ENCODE measurements at regions of chr1 and their contacts with region 1.

Region 1: GRCh38 chr1:160291248-160292220 is 6.6 kb upstream of the PEX19 start:
- DNase-seq: peak; percentile 62
- H3K4me3 ChIP-seq: no peak overlapping the region
- H3K27ac ChIP-seq: no peak overlapping the region
- H3K4me1 ChIP-seq: no peaks in the 10 kb centered on the region
- H3K27me3 ChIP-seq: no peaks in the 10 kb centered on the region
- CTCF ChIP-seq: peak; percentile 86
- EP300 ChIP-seq: no peak
- RAD21 ChIP-seq: peak; percentile 61

Region 2: DNA sequence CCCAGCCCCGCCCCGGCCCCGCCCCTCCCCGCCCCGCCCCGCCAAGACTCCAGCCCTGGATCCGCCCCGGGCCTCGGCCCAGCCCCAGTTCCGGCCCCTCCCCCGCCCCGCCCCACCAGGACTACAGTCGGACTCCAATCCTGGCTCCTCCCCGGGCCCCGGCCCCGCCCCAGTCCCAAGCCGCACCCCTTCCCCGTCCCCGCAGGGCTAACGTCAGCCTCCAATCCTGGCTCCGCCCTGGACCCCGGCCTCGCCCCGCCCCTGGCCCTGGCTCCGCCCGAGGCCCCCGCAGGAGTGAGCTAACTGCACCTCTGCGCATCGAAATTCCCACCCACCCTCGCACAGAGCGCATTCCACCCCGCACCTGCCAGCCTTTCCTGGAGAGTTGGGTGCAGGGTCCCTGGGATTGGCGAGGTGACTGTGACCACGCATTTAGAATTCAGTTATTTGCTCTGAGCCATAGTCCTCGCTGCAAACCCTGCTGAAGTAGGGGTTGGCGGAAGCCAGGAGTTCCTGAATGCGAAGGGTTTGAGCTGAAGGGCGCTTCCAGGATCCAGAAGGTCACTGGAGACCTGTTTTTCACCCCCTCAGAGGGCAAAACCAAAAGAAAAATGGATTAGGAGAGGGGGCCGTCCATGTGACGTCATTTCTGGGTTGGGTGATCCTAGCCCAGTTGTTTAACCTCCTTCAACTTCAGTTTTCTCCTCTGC is 192.5 kb before region 1 on chr1:
- CTCF ChIA-PET with region 1: interaction called, 102 read pairs
- POLR2A ChIA-PET with region 1: no interaction called
- DNase-seq: peak; percentile 98
- H3K4me3 ChIP-seq: peak overlapping the region; percentile 36 to 44; a peak in 3 of 4 replicates
- H3K27ac ChIP-seq: peak overlapping the region; percentile 35 to 55; a peak in 3 of 4 replicates
- H3K4me1 ChIP-seq: peaks cover 7 to 28% of the 10 kb centered on the region in 2 experiments; a peak in 1 of 4 replicates
- H3K27me3 ChIP-seq: no peaks in the 10 kb centered on the region
- CTCF ChIP-seq: no peak
- EP300 ChIP-seq: no peak
- RAD21 ChIP-seq: no peak

Region 3: DNA sequence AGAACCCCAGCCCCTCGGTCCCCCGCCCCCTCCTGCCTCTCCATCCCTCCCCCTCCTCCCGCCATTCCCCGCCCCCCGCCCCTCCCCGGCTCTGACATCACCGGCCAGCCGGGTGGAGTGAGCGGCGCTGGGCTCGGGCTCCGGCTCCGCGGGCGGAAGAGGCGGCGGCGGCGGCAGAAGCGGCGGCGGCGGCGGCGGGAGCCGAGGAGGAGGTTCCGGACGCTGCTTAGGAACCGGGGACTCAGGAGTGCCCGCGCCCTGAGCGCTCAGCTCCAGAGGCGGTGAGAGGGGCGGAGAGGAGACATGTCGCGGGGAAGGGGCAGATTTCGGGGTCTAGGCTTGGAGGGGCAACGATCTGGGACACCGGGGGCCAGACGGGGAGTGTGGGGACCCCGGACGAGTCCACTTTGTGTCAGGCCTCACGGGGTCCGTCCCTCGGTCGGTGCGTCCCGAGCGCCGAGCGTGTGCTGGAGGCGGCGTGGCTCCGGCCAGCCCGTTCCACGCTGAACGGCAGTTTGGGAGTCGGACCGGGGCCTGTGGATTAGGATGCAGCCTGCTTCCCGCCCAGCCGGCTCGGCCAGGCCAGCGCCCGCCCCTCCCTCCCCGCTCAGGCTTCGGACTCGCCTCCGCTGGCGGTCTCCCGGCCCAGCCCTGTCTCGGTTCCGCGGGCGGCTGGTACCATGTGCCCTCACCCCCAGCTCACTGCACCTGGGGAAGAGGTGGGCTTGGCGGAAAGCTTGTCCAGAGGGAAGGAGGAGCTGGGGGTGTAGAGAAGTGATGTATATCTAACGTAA is 86.1 kb before region 1 on chr1 and contains the start of gene PEA15:
- CTCF ChIA-PET with region 1: interaction called, 23 read pairs
- POLR2A ChIA-PET with region 1: no interaction called
- DNase-seq: peak; percentile 96
- H3K4me3 ChIP-seq: peak within 1 kb of the TSS; percentile 94 to 97
- H3K27ac ChIP-seq: peak within 1 kb of the TSS; percentile 87 to 99
- H3K4me1 ChIP-seq: peaks cover 36 to 56% of the 10 kb centered on the region in 2 experiments
- H3K27me3 ChIP-seq: no peaks in the 10 kb centered on the region
- CTCF ChIP-seq: no peak
- EP300 ChIP-seq: peak in 1 of 2 experiments; percentile 39; a peak in 1 of 4 replicates
- RAD21 ChIP-seq: no peak
- polyA plus RNA-seq, gene PEA15: 322 and 382 TPM in 2 replicates

Region 4: DNA sequence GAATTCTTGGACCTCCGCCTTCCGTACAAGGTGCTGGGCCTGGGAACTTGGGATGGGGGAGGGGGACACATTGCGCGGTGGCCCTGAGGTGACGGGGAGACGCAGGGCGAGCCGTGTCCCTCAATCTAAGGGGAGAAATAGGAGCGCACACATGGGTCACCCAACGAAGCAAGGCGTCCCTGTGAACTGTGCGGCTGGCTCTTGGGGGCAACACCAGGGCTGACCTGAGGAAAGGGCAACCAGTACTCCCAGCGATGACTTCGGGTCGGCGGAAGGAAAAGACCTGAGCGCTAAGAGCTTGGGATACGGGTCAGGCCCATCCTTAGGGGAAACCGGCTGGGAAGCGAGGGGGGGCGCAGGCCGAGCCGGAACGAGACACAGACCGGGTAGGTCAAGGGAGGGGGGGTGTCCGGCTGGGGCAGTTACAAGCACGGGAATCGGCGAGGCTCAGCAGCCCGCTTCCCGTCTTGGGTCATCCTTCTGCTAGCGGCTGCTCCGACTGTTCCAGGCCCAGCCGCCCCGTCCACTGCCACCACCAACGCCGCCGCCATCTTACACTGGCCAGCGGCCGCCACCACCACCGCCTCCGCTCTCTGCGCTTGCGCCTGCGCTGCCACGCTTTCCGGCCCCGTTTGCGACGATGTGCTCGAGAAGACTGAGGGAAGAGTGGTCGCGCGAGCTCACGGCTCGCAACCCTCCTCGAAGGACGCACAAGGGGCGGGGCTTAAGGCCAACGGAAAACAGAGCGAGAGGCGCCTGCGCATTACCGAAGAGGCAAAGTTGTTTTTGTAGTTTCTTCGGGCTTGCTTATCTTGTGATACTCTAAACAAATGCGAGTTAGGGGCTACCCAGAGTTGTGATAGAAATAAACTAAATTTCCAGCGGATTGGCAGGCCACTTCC is 29.4 kb before region 1 on chr1 and contains the start of gene DCAF8:
- CTCF ChIA-PET with region 1: interaction called, 19 read pairs
- POLR2A ChIA-PET with region 1: interaction called, 3 read pairs
- DNase-seq: peak; percentile 94
- H3K4me3 ChIP-seq: peak within 1 kb of the TSS; percentile 93 to 95
- H3K27ac ChIP-seq: peak within 1 kb of the TSS; percentile 96
- H3K4me1 ChIP-seq: peaks cover 12 to 18% of the 10 kb centered on the region in 2 experiments
- H3K27me3 ChIP-seq: no peaks in the 10 kb centered on the region
- CTCF ChIP-seq: no peak
- EP300 ChIP-seq: no peak
- RAD21 ChIP-seq: no peak
- polyA plus RNA-seq, gene DCAF8: 108 and 150 TPM in 2 replicates

Region 5: DNA sequence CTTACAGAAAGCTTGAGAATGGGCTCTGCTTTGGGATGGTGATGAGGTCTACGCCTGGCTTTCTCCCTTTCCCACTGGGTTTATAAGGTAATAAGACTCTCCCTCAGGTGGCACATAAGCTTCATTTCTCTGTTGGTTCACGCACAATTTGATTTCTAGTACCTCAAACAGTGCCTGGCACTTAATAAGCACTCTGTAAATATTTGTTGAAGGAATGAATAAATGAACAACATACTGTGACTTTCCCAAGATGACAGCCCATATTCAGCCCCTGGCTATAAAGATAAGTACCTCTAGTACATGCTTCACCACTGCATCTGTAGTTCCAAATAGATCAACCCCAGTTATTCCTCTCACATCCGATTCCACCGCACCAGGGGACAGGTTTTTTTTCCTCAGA is 33.7 kb after region 1 on chr1:
- CTCF ChIA-PET with region 1: interaction called, 13 read pairs
- POLR2A ChIA-PET with region 1: no interaction called
- DNase-seq: no peak
- H3K4me3 ChIP-seq: no peak overlapping the region
- H3K27ac ChIP-seq: no peak overlapping the region
- H3K4me1 ChIP-seq: no peaks in the 10 kb centered on the region
- H3K27me3 ChIP-seq: no peaks in the 10 kb centered on the region
- CTCF ChIP-seq: no peak
- EP300 ChIP-seq: no peak
- RAD21 ChIP-seq: no peak

Region 6: DNA sequence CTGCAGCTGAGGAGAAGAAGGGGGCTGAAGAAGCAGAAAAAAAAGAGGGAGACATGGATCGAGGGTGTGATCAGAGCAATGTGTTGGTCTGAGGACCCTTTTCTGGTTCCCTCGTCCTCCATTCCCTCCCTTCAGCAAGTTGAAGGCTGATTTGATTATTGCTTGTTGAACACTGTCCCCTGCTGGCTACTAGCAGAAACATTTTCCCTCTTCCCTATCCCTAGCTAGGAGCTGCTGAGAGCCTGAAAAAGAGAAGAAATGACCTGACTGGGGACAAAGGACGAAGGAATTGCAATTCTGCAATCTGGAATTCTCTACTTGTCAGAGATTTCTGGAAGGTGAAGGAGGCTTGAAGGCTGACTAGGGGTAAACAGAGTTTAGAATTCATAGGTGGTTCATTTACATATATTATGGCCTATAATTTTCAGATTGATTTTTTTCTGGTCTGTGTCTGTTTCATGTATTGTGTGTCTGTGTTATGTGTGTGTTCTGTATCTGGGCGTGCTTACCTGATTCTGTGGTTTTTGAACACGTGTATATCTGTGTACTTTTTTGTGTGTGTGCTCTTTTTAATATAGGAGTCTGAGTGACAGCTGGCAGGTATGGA is 85.1 kb after region 1 on chr1:
- CTCF ChIA-PET with region 1: interaction called, 31 read pairs
- POLR2A ChIA-PET with region 1: no interaction called
- DNase-seq: peak; percentile 79
- H3K4me3 ChIP-seq: no peak overlapping the region; a peak in 1 of 4 replicates
- H3K27ac ChIP-seq: no peak overlapping the region
- H3K4me1 ChIP-seq: peaks cover 0 to 9% of the 10 kb centered on the region in 2 experiments; a peak in 2 of 4 replicates
- H3K27me3 ChIP-seq: no peaks in the 10 kb centered on the region
- CTCF ChIP-seq: peak; percentile 93
- EP300 ChIP-seq: no peak
- RAD21 ChIP-seq: peak; percentile 92